Thyroid gland (tissue), 4 donors: ENCODE measurements at regions of chr20 and their contacts with region 1.

Region 1: DNA sequence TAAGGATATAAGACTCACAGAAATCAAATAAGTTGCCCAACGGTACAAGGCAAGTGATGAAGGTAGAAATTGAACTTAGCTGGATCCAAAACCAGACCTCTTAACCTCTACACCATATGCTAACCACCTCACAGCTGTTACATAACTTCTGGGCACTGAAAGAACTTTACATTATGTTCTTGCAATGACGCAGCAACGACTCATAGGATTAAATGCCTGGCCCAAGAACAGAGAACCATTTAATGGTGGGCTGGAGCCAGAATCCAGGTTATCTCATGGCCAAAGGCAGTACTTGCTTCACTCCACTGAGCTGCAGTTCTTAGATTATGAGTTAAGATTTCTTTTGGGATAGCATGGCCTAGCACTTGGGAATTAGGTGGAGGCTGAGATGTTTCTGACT is 4.4 kb downstream of the TRMT6 start:
- DNase-seq: no peak
- H3K4me3 ChIP-seq: no peak overlapping the region
- H3K27ac ChIP-seq: no peak overlapping the region
- H3K4me1 ChIP-seq: peaks cover 8 to 9% of the 10 kb centered on the region in 2 donors
- H3K27me3 ChIP-seq: no peaks in the 10 kb centered on the region
- CTCF ChIP-seq: no peak
- POLR2A ChIP-seq: no peak

Region 2: GRCh38 chr20:6044115-6044514 is 98.2 kb after region 1 on chr20:
- intact Hi-C with region 1: no loop called
- DNase-seq: no peak
- H3K4me3 ChIP-seq: no peak overlapping the region
- H3K27ac ChIP-seq: no peak overlapping the region
- H3K4me1 ChIP-seq: no peaks in the 10 kb centered on the region
- H3K27me3 ChIP-seq: no peaks in the 10 kb centered on the region
- CTCF ChIP-seq: no peak
- POLR2A ChIP-seq: no peak

Region 3: DNA sequence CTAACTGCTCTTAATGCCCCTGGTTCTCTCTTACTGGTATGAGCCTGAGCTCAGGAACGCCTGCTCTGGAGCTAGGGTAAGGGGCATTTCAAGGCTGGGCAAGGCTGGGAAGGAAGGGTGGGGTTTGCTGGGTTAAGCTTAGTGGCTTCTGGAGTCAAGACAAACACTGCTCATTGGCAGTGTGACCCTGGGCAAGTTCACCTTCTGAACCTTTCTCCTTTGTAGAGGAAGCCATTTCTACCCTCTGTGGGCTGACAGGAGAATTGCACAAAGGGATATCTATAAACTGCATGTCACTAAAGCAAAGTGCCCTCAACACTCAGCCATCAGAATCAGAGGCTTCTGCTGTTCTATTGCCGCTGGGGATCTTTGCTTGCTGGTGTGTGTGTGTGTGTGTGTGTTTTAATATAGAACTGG is 128.2 kb after region 1 on chr20:
- intact Hi-C with region 1: loop called (anchors 10 kb)
- DNase-seq: no peak
- H3K4me3 ChIP-seq: no peak overlapping the region
- H3K27ac ChIP-seq: no peak overlapping the region
- H3K4me1 ChIP-seq: peaks cover 8 to 9% of the 10 kb centered on the region in 2 donors
- H3K27me3 ChIP-seq: no peaks in the 10 kb centered on the region
- CTCF ChIP-seq: peak in 2 of 6 experiments; percentile 17 to 22
- POLR2A ChIP-seq: no peak

Region 4: GRCh38 chr20:6142348-6142993 is 196.5 kb after region 1 on chr20:
- intact Hi-C with region 1: no loop called
- DNase-seq: peak; percentile 54 to 62
- H3K4me3 ChIP-seq: no peak overlapping the region
- H3K27ac ChIP-seq: no peak overlapping the region
- H3K4me1 ChIP-seq: no peaks in the 10 kb centered on the region
- H3K27me3 ChIP-seq: no peaks in the 10 kb centered on the region
- CTCF ChIP-seq: peak; percentile 56 to 86 (median 81)
- POLR2A ChIP-seq: no peak

Region 5: GRCh38 chr20:6184080-6184479 is 238.1 kb after region 1 on chr20:
- intact Hi-C with region 1: no loop called
- DNase-seq: no peak
- H3K4me3 ChIP-seq: no peak overlapping the region
- H3K27ac ChIP-seq: no peak overlapping the region
- H3K4me1 ChIP-seq: no peaks in the 10 kb centered on the region
- H3K27me3 ChIP-seq: no peaks in the 10 kb centered on the region
- CTCF ChIP-seq: no peak
- POLR2A ChIP-seq: no peak

Region 6: GRCh38 chr20:6956574-6956973 is 1010.6 kb after region 1 on chr20:
- intact Hi-C with region 1: no loop called
- DNase-seq: no peak
- H3K4me3 ChIP-seq: no peak overlapping the region
- H3K27ac ChIP-seq: no peak overlapping the region
- H3K4me1 ChIP-seq: no peaks in the 10 kb centered on the region
- H3K27me3 ChIP-seq: no peaks in the 10 kb centered on the region
- CTCF ChIP-seq: no peak
- POLR2A ChIP-seq: no peak